Activated naive CD8-positive, alpha-beta T cell treated with anti-CD3 and anti-CD28 coated beads, Interleukin-2, amount 10 ng/mL, durations not matched to agents 7 days and 5 days (primary cell): ENCODE measurements at regions of chr6 and their contacts with region 1.

Region 1: GRCh38 chr6:82247634-82248232 is at the start of gene IBTK:
- DNase-seq: peak; percentile 92
- ATAC-seq: peak; percentile 95
- H3K4me3 Mint-ChIP-seq: peak within 1 kb of the TSS; percentile 95
- H3K27ac Mint-ChIP-seq: peak within 1 kb of the TSS; percentile 91
- H3K4me1 Mint-ChIP-seq: peaks cover 25% of the 10 kb centered on the region
- H3K27me3 Mint-ChIP-seq: peaks cover 4% of the 10 kb centered on the region
- total RNA-seq, gene IBTK: 24.6 to 25.3 TPM

Region 2: DNA sequence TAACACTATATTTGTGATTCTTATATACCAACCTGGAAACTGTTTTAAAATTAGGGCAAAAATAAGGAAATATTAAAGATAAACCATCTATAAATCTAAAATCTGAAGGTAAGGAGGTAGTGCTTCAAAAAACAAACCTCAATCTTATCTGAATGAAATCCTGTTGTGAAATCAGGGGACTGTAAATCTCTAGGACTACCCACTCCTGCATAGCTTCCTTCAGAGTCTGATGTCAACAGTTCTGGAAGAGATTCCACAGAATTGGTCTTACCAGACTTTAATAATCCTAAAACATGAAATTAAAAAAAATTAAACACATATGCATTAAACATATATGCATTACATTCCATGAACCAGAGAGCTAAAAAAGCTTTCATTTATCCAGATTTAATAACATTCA is 51.6 kb before region 1 on chr6:
- POLR2A ChIA-PET with region 1: no interaction called
- DNase-seq: no peak
- ATAC-seq: no peak
- H3K4me3 Mint-ChIP-seq: no peak overlapping the region
- H3K27ac Mint-ChIP-seq: no peak overlapping the region
- H3K4me1 Mint-ChIP-seq: no peaks in the 10 kb centered on the region
- H3K27me3 Mint-ChIP-seq: no peaks in the 10 kb centered on the region

Region 3: GRCh38 chr6:83065511-83066192 is 817.9 kb after region 1 on chr6 and contains the start of gene UBE3D:
- POLR2A ChIA-PET with region 1: interaction called, 12 read pairs
- DNase-seq: peak; percentile 98
- ATAC-seq: peak; percentile 71
- H3K4me3 Mint-ChIP-seq: peak within 1 kb of the TSS; percentile 89
- H3K27ac Mint-ChIP-seq: peak within 1 kb of the TSS; percentile 76
- H3K4me1 Mint-ChIP-seq: peaks cover 30% of the 10 kb centered on the region
- H3K27me3 Mint-ChIP-seq: no peaks in the 10 kb centered on the region
- total RNA-seq, gene UBE3D: 4.4 to 4.7 TPM